Left ventricle myocardium superior (tissue), 1 donor: ENCODE measurements at regions of chr4 and their contacts with region 1.

Region 1: GRCh38 chr4:10554694-10555093 is 97.5 kb upstream of the ZNF518B start:
- DNase-seq: no peak
- ATAC-seq: peak; percentile 60

Region 2: GRCh38 chr4:10157478-10158332 is 397.0 kb before region 1 on chr4:
- intact Hi-C with region 1: loop called (anchors 5 kb)
- DNase-seq: peak; percentile 48
- ATAC-seq: peak; percentile 69